ENCODE measurements at regions of chrX and their contacts with region 1.

Region 1: GRCh38 chrX:2614911-2615310 is 76.2 kb upstream of the CD99 start:
- DNase-seq: no peak
- H3K4me3 ChIP-seq: no peak overlapping the region
- H3K27ac ChIP-seq: peak overlapping the region in 2 of 4 donors; percentile 10 to 42
- H3K4me1 ChIP-seq: peaks cover 3 to 24% (median 16%) of the 10 kb centered on the region in 4 donors
- H3K27me3 ChIP-seq: no peaks in the 10 kb centered on the region
- CTCF ChIP-seq: peak in 2 of 3 experiments; percentile 32 to 43
- EP300 ChIP-seq: no peak
- POLR2A ChIP-seq: no peak

Region 2: GRCh38 chrX:2690856-2691542 is 76.1 kb after region 1 on chrX and contains the start of gene CD99:
- intact Hi-C with region 1: loop called (anchors 10 kb)
- DNase-seq: peak; percentile 98
- H3K4me3 ChIP-seq: peak within 1 kb of the TSS; percentile 79 to 95 (median 86)
- H3K27ac ChIP-seq: peak within 1 kb of the TSS; percentile 85 to 93 (median 88)
- H3K4me1 ChIP-seq: peaks cover 35 to 46% (median 45%) of the 10 kb centered on the region in 4 donors
- H3K27me3 ChIP-seq: no peaks in the 10 kb centered on the region
- CTCF ChIP-seq: peak in 1 of 3 experiments; percentile 2
- EP300 ChIP-seq: no peak
- POLR2A ChIP-seq: peak; percentile 79
- total RNA-seq, gene CD99: 311 to 469 (median 376) TPM

Region 3: GRCh38 chrX:2714551-2714950 is 99.6 kb after region 1 on chrX:
- intact Hi-C with region 1: no loop called
- DNase-seq: no peak
- H3K4me3 ChIP-seq: no peak overlapping the region
- H3K27ac ChIP-seq: no peak overlapping the region
- H3K4me1 ChIP-seq: peaks cover 13 to 26% (median 23%) of the 10 kb centered on the region in 4 donors
- H3K27me3 ChIP-seq: no peaks in the 10 kb centered on the region
- CTCF ChIP-seq: no peak
- EP300 ChIP-seq: no peak
- POLR2A ChIP-seq: no peak

Region 4: DNA sequence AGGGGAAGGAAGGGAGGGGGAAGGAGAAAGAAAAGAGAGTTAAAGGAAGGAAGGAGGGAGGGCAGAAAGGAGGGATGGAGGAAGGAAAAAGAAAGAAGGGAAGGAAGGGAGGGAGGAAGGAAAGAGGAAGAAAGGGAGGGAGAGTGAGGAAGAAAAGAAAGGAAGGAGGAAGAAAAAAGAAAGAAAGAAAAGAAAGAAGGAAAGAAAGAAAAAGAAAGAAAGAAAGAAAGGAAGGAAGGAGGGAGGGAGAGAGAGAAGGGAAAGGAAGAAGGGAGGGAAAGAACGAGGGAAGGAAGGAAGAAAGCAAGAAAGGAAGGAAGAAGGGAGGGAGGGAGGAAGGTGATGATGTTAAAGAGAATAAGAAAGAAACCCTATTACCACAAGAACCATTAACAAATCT is 580.9 kb after region 1 on chrX:
- intact Hi-C with region 1: no loop called
- DNase-seq: no peak
- H3K4me3 ChIP-seq: no peak overlapping the region
- H3K27ac ChIP-seq: no peak overlapping the region
- H3K4me1 ChIP-seq: no peaks in the 10 kb centered on the region
- H3K27me3 ChIP-seq: no peaks in the 10 kb centered on the region
- CTCF ChIP-seq: no peak
- EP300 ChIP-seq: no peak
- POLR2A ChIP-seq: no peak